CD8-positive, alpha-beta T cell (primary cell): ENCODE measurements at regions of chr19 and their contacts with region 1.

Region 1: DNA sequence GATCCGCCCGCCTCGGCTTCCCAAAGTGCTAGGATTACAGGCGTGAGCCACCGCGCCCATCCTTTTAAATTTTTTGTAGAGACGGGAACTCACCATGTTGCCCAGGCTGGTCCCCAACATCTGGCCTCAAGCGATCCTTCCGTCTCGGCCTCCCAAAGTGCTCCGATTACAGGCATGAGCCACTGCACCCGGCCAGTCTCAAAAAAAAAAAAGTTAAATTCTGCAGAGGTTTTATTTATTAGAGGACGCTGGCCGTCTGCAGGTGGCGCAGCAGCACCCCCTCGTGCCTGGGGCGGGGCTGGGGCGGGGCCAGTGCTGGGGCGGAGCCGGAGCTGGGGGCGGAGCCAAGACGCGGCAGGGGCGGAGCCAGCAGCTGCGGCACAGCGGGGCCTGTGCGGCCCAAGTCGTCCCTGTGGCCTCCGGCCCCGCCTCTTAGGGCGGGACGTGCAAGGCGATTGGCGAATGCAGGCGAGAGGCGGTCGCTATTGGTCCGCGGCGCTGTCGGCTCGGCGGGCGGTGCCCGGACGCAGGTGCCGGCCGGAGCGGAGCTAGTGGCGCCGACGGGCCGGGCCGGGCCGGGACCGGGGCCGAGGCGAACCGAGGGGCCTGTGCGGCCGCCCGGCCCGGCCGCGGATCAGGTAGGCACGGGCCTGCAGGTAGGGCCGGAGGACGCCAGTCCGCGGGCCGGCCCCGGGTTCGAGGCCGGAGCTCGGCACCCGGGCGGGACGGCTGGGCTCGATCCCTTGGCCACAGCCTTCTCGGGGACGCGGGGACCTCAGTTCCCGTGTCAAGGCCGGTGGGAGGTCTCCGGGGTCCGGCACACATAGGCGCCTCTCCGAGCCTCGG is at the start of gene MARCHF2:
- DNase-seq: peak; percentile 92 to 99 (median 96)
- ATAC-seq: peak; percentile 100
- H3K4me3 ChIP-seq: peak within 1 kb of the TSS; percentile 66 to 82
- H3K4me3 Mint-ChIP-seq: peak within 1 kb of the TSS; percentile 72
- H3K27ac ChIP-seq: no peak within 1 kb of the TSS
- H3K27ac Mint-ChIP-seq: no peak within 1 kb of the TSS
- H3K4me1 ChIP-seq: peaks cover 7% of the 10 kb centered on the region
- H3K4me1 Mint-ChIP-seq: peaks cover 8% of the 10 kb centered on the region
- H3K27me3 ChIP-seq: no peaks in the 10 kb centered on the region
- H3K27me3 Mint-ChIP-seq: no peaks in the 10 kb centered on the region
- CTCF ChIP-seq: peak; percentile 65
- total RNA-seq, gene MARCHF2: 14.5 to 17.5 TPM

Region 2: GRCh38 chr19:7636691-7637373 is 776.2 kb before region 1 on chr19 and contains the start of gene STXBP2:
- CTCF ChIA-PET with region 1: no interaction called
- POLR2A ChIA-PET with region 1: no interaction called
- intact Hi-C with region 1: loop called in 1 of 2 experiments (anchors 5 kb)
- DNase-seq: peak; percentile 89 to 99 (median 94)
- ATAC-seq: peak; percentile 99
- H3K4me3 ChIP-seq: peak within 1 kb of the TSS; percentile 36 to 93
- H3K4me3 Mint-ChIP-seq: peak within 1 kb of the TSS; percentile 85
- H3K27ac ChIP-seq: peak within 1 kb of the TSS; percentile 70 to 97
- H3K27ac Mint-ChIP-seq: peak within 1 kb of the TSS; percentile 91
- H3K4me1 ChIP-seq: peaks cover 24% of the 10 kb centered on the region
- H3K4me1 Mint-ChIP-seq: peaks cover 41% of the 10 kb centered on the region
- H3K27me3 ChIP-seq: no peaks in the 10 kb centered on the region
- H3K27me3 Mint-ChIP-seq: no peaks in the 10 kb centered on the region
- CTCF ChIP-seq: peak; percentile 34
- total RNA-seq, gene STXBP2: 260 to 270 TPM

Region 3: GRCh38 chr19:8269724-8270123 is 143.3 kb before region 1 on chr19:
- CTCF ChIA-PET with region 1: no interaction called
- POLR2A ChIA-PET with region 1: no interaction called
- intact Hi-C with region 1: loop called in 1 of 2 experiments (anchors 5 kb)
- DNase-seq: peak in 1 of 9 experiments; percentile 39
- ATAC-seq: no peak
- H3K4me3 ChIP-seq: peak overlapping the region; percentile 69 to 90
- H3K4me3 Mint-ChIP-seq: peak overlapping the region; percentile 95
- H3K27ac ChIP-seq: peak overlapping the region; percentile 77 to 81
- H3K27ac Mint-ChIP-seq: peak overlapping the region; percentile 96
- H3K4me1 ChIP-seq: peaks cover 10% of the 10 kb centered on the region
- H3K4me1 Mint-ChIP-seq: peaks cover 16% of the 10 kb centered on the region
- H3K27me3 ChIP-seq: no peaks in the 10 kb centered on the region
- H3K27me3 Mint-ChIP-seq: no peaks in the 10 kb centered on the region
- CTCF ChIP-seq: no peak

Region 4: DNA sequence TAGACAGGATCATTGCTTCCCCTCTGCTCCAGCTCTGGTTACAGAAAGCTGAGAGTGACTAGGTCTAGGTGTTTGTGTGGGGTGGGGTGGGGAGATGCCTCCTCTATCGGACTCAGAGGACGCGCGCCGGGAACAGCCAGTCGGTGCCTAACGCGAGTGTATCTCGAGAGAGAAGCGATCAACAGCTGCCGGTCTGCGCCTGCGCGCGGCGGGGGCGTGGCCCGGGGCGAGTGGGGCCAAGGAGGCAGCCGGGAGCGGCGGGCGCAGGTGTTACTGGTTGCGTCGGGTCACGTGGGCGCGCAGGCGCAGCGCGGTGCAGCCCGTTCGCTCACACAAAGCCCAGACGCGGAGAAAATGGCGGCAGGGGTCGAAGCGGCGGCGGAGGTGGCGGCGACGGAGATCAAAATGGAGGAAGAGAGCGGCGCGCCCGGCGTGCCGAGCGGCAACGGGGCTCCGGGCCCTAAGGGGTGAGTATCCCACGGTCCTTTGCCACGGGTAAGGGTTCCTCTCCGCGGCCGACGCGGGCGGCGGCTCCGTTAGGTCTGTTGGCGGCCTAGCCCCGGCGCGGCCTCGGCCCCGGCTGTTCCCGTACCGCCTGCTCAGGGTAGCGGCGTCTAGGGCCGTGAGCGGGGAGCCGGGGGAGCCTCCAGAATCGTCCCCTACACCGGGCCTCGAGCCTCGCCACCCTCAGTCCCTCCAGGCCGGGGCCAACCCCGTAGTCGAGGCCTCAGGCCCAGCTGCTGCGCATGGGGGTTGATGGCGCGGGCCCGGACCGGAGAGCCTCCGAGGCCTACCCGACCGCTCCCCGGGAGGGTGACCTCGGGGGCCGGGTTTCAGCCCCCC is 31.9 kb after region 1 on chr19 and contains the start of gene HNRNPM:
- CTCF ChIA-PET with region 1: interaction called, 4 read pairs
- POLR2A ChIA-PET with region 1: interaction called, 10 read pairs
- intact Hi-C with region 1: loop called (anchors 1 kb)
- DNase-seq: peak; percentile 99 to 100 (median 100)
- ATAC-seq: peak; percentile 93
- H3K4me3 ChIP-seq: peak within 1 kb of the TSS; percentile 69 to 81
- H3K4me3 Mint-ChIP-seq: peak within 1 kb of the TSS; percentile 97
- H3K27ac ChIP-seq: peak within 1 kb of the TSS; percentile 93 to 96
- H3K27ac Mint-ChIP-seq: peak within 1 kb of the TSS; percentile 98
- H3K4me1 ChIP-seq: peaks cover 34% of the 10 kb centered on the region
- H3K4me1 Mint-ChIP-seq: peaks cover 40% of the 10 kb centered on the region
- H3K27me3 ChIP-seq: no peaks in the 10 kb centered on the region
- H3K27me3 Mint-ChIP-seq: no peaks in the 10 kb centered on the region
- CTCF ChIP-seq: no peak
- total RNA-seq, gene HNRNPM: 268 to 278 TPM

Region 5: DNA sequence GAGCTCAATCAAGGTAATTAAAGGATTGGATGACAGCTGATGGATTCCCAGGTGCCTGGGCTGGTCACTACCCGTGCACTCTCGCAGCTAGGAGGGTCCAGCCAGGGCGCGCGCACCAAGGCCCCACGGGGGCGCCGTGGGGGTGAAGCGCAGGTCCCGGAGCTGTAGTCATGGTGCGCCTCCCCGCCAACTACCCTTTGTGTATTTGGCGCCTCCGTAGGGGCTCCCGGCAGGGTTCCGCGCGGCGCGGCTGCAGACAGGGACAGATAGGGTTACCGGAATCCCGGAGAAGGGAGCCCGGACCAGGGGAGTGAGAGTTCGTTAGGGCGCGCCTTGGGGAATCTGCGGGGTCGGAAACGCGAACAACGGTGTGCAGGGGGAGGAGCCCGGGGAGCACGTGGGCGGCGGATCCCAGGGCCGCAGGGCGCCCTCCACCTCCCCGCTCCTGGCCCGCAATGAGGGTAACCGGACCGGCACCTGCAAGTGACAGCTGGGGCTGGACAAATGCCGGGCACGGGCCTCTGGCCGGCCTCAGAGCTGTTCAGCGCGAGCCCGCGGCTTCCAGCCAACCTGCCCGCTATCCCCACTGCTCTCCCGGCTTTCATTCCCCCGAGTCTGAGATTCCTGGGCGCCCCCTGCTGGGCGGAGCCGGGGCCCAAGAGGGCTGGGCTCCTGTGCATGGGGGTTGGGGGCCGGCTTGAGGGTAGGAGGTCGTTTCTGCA is 92.8 kb after region 1 on chr19:
- CTCF ChIA-PET with region 1: interaction called, 17 read pairs
- POLR2A ChIA-PET with region 1: interaction called, 3 read pairs
- intact Hi-C with region 1: no loop called
- DNase-seq: peak in 8 of 9 experiments; percentile 54 to 85 (median 70)
- ATAC-seq: peak; percentile 78
- H3K4me3 ChIP-seq: peak overlapping the region; percentile 58 to 83
- H3K4me3 Mint-ChIP-seq: peak overlapping the region; percentile 91
- H3K27ac ChIP-seq: peak overlapping the region; percentile 32 to 43
- H3K27ac Mint-ChIP-seq: peak overlapping the region; percentile 87
- H3K4me1 ChIP-seq: peaks cover 19% of the 10 kb centered on the region
- H3K4me1 Mint-ChIP-seq: peaks cover 19% of the 10 kb centered on the region
- H3K27me3 ChIP-seq: no peaks in the 10 kb centered on the region
- H3K27me3 Mint-ChIP-seq: no peaks in the 10 kb centered on the region
- CTCF ChIP-seq: peak; percentile 45

Region 6: GRCh38 chr19:8592231-8593009 is 179.4 kb after region 1 on chr19:
- CTCF ChIA-PET with region 1: no interaction called
- POLR2A ChIA-PET with region 1: no interaction called
- intact Hi-C with region 1: loop called in 1 of 2 experiments (anchors 1 kb)
- DNase-seq: peak; percentile 91 to 98 (median 95)
- ATAC-seq: peak; percentile 86
- H3K4me3 ChIP-seq: peak overlapping the region; percentile 47 to 50
- H3K4me3 Mint-ChIP-seq: peak overlapping the region; percentile 84
- H3K27ac ChIP-seq: peak overlapping the region in 1 of 2 experiments; percentile 32
- H3K27ac Mint-ChIP-seq: peak overlapping the region; percentile 84
- H3K4me1 ChIP-seq: peaks cover 21% of the 10 kb centered on the region
- H3K4me1 Mint-ChIP-seq: peaks cover 36% of the 10 kb centered on the region
- H3K27me3 ChIP-seq: no peaks in the 10 kb centered on the region
- H3K27me3 Mint-ChIP-seq: no peaks in the 10 kb centered on the region
- CTCF ChIP-seq: no peak

Region 7: GRCh38 chr19:8641908-8642547 is 229.0 kb after region 1 on chr19:
- CTCF ChIA-PET with region 1: no interaction called
- POLR2A ChIA-PET with region 1: no interaction called
- intact Hi-C with region 1: loop called (anchors 5 kb)
- DNase-seq: peak in 3 of 9 experiments; percentile 23 to 76 (median 67)
- ATAC-seq: peak; percentile 74
- H3K4me3 ChIP-seq: no peak overlapping the region
- H3K4me3 Mint-ChIP-seq: no peak overlapping the region
- H3K27ac ChIP-seq: no peak overlapping the region
- H3K27ac Mint-ChIP-seq: no peak overlapping the region
- H3K4me1 ChIP-seq: peaks cover 7% of the 10 kb centered on the region
- H3K4me1 Mint-ChIP-seq: peaks cover 11% of the 10 kb centered on the region
- H3K27me3 ChIP-seq: peaks cover 0 to 4% of the 10 kb centered on the region in 2 experiments
- H3K27me3 Mint-ChIP-seq: peaks cover 26% of the 10 kb centered on the region
- CTCF ChIP-seq: peak; percentile 63